IMR-90 (cell line): ENCODE measurements at regions of chr2 and their contacts with region 1.

Region 1: GRCh38 chr2:238263204-238264071 is 23.6 kb upstream of the HES6 start:
- DNase-seq: peak; percentile 92
- ATAC-seq: peak; percentile 95
- H3K4me3 ChIP-seq: no peak overlapping the region
- H3K27ac ChIP-seq: no peak overlapping the region
- H3K4me1 ChIP-seq: peaks cover 7% of the 10 kb centered on the region; the same call in 1 of the 2 replicates
- H3K27me3 ChIP-seq: no peaks in the 10 kb centered on the region
- CTCF ChIP-seq: peak; percentile 92
- POLR2A ChIP-seq: peak; percentile 43; the same call in 1 of the 2 replicates
- RAD21 ChIP-seq: peak; percentile 87

Region 2: GRCh38 chr2:237774802-237775553 is 488.5 kb before region 1 on chr2:
- CTCF ChIA-PET with region 1: no interaction called
- POLR2A ChIA-PET with region 1: interaction called, 9 read pairs
- dilution Hi-C with region 1: no loop called
- in situ Hi-C with region 1: no loop called
- intact Hi-C with region 1: loop called (anchors 10 kb)
- DNase-seq: peak; percentile 50
- ATAC-seq: peak; percentile 95
- H3K4me3 ChIP-seq: no peak overlapping the region
- H3K27ac ChIP-seq: no peak overlapping the region
- H3K4me1 ChIP-seq: no peaks in the 10 kb centered on the region
- H3K27me3 ChIP-seq: no peaks in the 10 kb centered on the region
- CTCF ChIP-seq: peak; percentile 59
- POLR2A ChIP-seq: no peak
- RAD21 ChIP-seq: peak; percentile 59

Region 3: GRCh38 chr2:237858294-237859081 is 404.9 kb before region 1 on chr2:
- CTCF ChIA-PET with region 1: interaction called, 21 read pairs
- POLR2A ChIA-PET with region 1: no interaction called
- dilution Hi-C with region 1: no loop called
- in situ Hi-C with region 1: loop called (anchors 5 kb)
- intact Hi-C with region 1: loop called (anchors 1 kb)
- DNase-seq: peak; percentile 91
- ATAC-seq: peak; percentile 93
- H3K4me3 ChIP-seq: no peak overlapping the region
- H3K27ac ChIP-seq: no peak overlapping the region
- H3K4me1 ChIP-seq: peaks cover 4% of the 10 kb centered on the region; the same call in 1 of the 2 replicates
- H3K27me3 ChIP-seq: no peaks in the 10 kb centered on the region; the same call in 1 of the 2 replicates
- CTCF ChIP-seq: peak; percentile 97
- POLR2A ChIP-seq: peak; percentile 62
- RAD21 ChIP-seq: peak; percentile 99

Region 4: DNA sequence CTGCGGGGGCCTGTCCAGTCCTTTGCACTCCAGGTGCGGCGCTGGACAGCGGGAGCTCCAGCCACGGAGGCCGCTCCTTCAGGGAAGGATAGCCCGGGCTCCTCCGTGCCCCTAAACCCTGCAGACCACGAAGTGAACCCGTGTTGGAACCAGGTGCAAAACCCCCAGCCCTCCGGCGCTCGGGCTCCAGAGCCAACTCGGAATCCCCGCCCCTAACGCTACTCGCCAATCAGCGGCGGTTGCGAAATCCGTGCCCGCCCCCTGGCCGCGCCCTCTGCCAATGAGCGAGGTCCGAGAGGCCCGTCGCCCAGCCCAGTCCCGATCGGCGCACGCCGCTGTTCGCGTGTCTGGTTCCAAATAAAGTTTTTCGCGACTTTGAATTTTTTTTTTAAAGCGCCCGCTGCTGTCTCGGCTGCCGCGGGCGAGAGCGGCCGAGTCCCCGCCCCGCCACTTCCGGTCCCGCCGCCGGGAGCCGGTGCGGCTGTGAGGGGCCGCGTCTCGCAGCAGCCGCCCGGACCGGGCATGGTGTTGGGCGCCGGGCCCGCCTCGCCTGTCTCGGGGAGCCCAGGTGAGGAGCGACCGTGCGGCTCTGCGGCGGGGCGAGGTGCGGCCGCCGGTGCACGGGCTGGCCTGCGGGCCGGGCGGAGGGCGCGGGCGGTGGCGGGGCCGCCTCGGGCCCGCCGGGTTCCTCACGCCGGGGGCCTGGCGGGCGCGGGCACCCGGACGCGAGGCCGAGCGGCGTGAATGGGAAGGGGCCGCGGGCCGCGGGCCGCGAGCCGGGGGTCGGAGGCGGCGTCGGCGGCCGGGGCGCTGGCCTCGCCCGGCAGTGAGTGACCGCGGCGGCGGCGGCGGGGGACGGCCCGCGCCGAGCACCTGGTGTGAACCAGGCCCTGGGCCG is 296.6 kb before region 1 on chr2 and contains the start of gene UBE2F:
- CTCF ChIA-PET with region 1: interaction called, 3 read pairs
- POLR2A ChIA-PET with region 1: no interaction called
- dilution Hi-C with region 1: no loop called
- in situ Hi-C with region 1: no loop called
- intact Hi-C with region 1: loop called (anchors 2 kb)
- DNase-seq: peak; percentile 95
- ATAC-seq: peak; percentile 96
- H3K4me3 ChIP-seq: peak within 1 kb of the TSS; percentile 85
- H3K27ac ChIP-seq: peak within 1 kb of the TSS; percentile 66
- H3K4me1 ChIP-seq: peaks cover 6% of the 10 kb centered on the region
- H3K27me3 ChIP-seq: no peaks in the 10 kb centered on the region
- CTCF ChIP-seq: no peak
- POLR2A ChIP-seq: peak; percentile 61; the same call in 1 of the 2 replicates
- RAD21 ChIP-seq: no peak
- total RNA-seq, gene UBE2F: 44.6 and 59.4 TPM in 2 replicates

Region 5: DNA sequence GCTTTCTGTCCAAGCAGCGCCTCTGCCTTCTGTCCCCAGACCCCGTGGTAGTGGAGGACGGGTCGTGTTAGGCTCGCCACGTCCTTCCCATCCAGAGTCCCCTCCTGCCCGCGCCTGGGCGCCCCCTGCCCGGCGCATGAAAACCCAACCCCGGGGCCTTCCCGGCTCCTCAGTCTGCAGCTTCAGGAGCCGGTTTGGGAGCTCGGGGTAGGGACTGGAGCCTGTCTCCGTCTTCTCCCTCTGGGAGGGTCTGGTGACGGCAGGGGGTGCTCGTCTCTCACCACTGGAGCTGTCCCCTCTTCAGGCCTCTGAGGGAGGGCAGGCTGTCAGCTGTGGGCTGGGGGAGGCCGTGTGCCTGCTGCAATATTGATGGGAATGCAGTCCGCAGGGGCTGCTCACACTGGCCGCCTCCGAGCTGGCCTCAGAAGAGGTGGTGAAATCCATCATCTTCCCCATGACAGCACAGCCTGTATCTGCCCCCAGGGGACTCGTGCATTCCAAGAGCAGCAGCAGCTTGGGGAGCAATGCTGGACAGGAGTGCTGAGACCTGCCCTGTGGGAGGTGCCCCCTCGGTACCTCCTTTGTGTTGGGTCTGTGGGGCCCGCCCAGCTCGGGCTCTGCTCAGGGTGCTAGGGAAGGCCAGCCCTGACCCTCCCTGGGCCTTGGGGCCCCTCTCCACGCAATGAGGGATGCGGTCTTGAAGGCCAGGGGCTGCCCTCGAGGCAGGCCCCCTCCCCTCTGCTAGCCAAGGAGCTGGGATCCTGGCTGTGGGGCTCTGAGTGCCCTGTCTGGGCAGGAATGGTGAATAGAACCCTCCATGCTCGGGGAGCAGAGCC is 142.8 kb before region 1 on chr2:
- CTCF ChIA-PET with region 1: interaction called, 3 read pairs
- POLR2A ChIA-PET with region 1: no interaction called
- dilution Hi-C with region 1: no loop called
- in situ Hi-C with region 1: no loop called
- intact Hi-C with region 1: loop called (anchors 1 kb)
- DNase-seq: peak; percentile 19
- ATAC-seq: peak; percentile 83
- H3K4me3 ChIP-seq: no peak overlapping the region
- H3K27ac ChIP-seq: no peak overlapping the region
- H3K4me1 ChIP-seq: peaks cover 4% of the 10 kb centered on the region; the same call in 1 of the 2 replicates
- H3K27me3 ChIP-seq: peaks cover 33% of the 10 kb centered on the region
- CTCF ChIP-seq: peak; percentile 45
- POLR2A ChIP-seq: no peak
- RAD21 ChIP-seq: peak; percentile 54

Region 6: GRCh38 chr2:238438856-238439849 is 175.7 kb after region 1 on chr2:
- CTCF ChIA-PET with region 1: no interaction called
- POLR2A ChIA-PET with region 1: no interaction called
- dilution Hi-C with region 1: no loop called
- in situ Hi-C with region 1: no loop called
- intact Hi-C with region 1: no loop called
- DNase-seq: peak; percentile 98
- ATAC-seq: peak; percentile 56
- H3K4me3 ChIP-seq: no peak overlapping the region
- H3K27ac ChIP-seq: peak overlapping the region; percentile 22; the same call in 1 of the 2 replicates
- H3K4me1 ChIP-seq: peaks cover 28% of the 10 kb centered on the region
- H3K27me3 ChIP-seq: no peaks in the 10 kb centered on the region
- CTCF ChIP-seq: no peak
- POLR2A ChIP-seq: no peak
- RAD21 ChIP-seq: no peak